ENCODE measurements at regions of chr17 and their contacts with region 1.

Region 1: GRCh38 chr17:42388381-42389134 is at the start of gene STAT3:
- DNase-seq: peak; percentile 100
- ATAC-seq: peak; percentile 89
- H3K4me3 ChIP-seq: peak within 1 kb of the TSS; percentile 67 to 97 (median 91)
- H3K4me3 Mint-ChIP-seq: peak within 1 kb of the TSS; percentile 98
- H3K27ac ChIP-seq: peak within 1 kb of the TSS; percentile 97
- H3K27ac Mint-ChIP-seq: peak within 1 kb of the TSS; percentile 99
- H3K4me1 ChIP-seq: peaks cover 19 to 34% of the 10 kb centered on the region in 2 donors
- H3K4me1 Mint-ChIP-seq: peaks cover 51% of the 10 kb centered on the region
- H3K27me3 ChIP-seq: no peaks in the 10 kb centered on the region
- H3K27me3 Mint-ChIP-seq: no peaks in the 10 kb centered on the region
- CTCF ChIP-seq: no peak
- total RNA-seq, gene STAT3: 140 and 151 TPM in 2 replicates

Region 2: DNA sequence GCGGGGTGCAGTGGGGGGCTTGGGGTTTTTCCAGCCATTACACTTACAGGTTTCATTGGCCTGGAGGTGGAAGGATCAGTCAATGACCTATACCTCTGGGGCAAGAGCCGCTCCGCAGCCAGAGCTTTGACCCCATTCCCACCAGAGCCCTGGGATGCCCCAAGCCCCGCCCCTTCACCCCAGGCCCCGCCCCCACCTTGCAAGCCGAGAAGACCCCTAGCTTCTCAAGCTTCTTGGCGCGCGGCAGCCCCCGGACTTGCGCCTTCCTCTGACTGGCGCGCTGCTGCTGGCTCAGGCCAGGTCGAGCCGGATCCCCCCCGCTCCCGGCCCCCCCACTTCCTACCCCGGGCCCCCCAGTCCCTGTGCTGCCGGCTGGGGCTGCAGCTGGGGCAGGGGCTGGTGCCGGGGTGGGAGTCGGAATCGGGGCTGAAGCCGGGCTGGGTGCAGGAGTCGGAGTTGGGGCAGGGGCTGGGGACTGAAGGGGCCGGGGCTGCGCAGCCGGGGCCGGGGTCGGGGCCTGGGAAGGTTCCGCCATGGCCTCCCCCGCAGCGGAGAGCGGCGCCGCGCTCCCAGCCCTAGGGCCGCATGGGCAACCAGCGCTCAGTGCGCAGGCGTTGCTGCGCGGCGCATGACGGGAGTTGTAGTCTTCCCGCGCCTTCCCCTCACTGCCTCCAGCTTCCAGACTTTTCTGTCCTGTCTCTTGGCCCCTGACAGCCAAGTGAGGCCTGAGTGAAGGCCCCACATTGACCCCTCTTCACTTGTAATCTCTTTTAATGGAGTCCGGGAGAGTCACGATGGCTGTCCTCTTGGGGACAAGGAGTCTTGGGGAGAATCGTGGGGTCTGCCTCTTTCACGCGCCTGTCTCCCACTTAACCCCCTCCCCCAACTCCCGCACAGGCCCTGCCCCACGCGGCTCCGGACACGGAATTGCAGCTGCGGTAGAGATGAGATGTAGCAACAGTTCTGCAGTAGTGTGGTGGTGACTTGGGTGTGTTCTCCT is 267.5 kb before region 1 on chr17 and contains the start of gene KAT2A:
- CTCF ChIA-PET with region 1: interaction called, 3 read pairs
- POLR2A ChIA-PET with region 1: interaction called, 13 read pairs
- intact Hi-C with region 1: loop called (anchors 10 kb)
- DNase-seq: peak; percentile 82
- ATAC-seq: peak; percentile 89
- H3K4me3 ChIP-seq: peak within 1 kb of the TSS in 4 of 5 experiments; percentile 40 to 79 (median 58)
- H3K4me3 Mint-ChIP-seq: peak within 1 kb of the TSS; percentile 72
- H3K27ac ChIP-seq: no peak within 1 kb of the TSS
- H3K27ac Mint-ChIP-seq: peak within 1 kb of the TSS; percentile 59
- H3K4me1 ChIP-seq: peaks cover 14 to 26% of the 10 kb centered on the region in 2 donors
- H3K4me1 Mint-ChIP-seq: peaks cover 28% of the 10 kb centered on the region
- H3K27me3 ChIP-seq: no peaks in the 10 kb centered on the region
- H3K27me3 Mint-ChIP-seq: no peaks in the 10 kb centered on the region
- CTCF ChIP-seq: no peak
- total RNA-seq, gene KAT2A: 61.6 and 66.3 TPM in 2 replicates

Region 3: GRCh38 chr17:42312285-42313130 is 76.0 kb before region 1 on chr17:
- CTCF ChIA-PET with region 1: interaction called, 12 read pairs
- POLR2A ChIA-PET with region 1: interaction called, 12 read pairs
- intact Hi-C with region 1: no loop called
- DNase-seq: peak; percentile 87
- ATAC-seq: peak; percentile 72
- H3K4me3 ChIP-seq: peak overlapping the region in 4 of 5 experiments; percentile 29 to 64 (median 44)
- H3K4me3 Mint-ChIP-seq: peak overlapping the region; percentile 66
- H3K27ac ChIP-seq: no peak overlapping the region
- H3K27ac Mint-ChIP-seq: no peak overlapping the region
- H3K4me1 ChIP-seq: peaks cover 44 to 52% of the 10 kb centered on the region in 2 donors
- H3K4me1 Mint-ChIP-seq: peaks cover 51% of the 10 kb centered on the region
- H3K27me3 ChIP-seq: no peaks in the 10 kb centered on the region
- H3K27me3 Mint-ChIP-seq: no peaks in the 10 kb centered on the region
- CTCF ChIP-seq: peak; percentile 76

Region 4: DNA sequence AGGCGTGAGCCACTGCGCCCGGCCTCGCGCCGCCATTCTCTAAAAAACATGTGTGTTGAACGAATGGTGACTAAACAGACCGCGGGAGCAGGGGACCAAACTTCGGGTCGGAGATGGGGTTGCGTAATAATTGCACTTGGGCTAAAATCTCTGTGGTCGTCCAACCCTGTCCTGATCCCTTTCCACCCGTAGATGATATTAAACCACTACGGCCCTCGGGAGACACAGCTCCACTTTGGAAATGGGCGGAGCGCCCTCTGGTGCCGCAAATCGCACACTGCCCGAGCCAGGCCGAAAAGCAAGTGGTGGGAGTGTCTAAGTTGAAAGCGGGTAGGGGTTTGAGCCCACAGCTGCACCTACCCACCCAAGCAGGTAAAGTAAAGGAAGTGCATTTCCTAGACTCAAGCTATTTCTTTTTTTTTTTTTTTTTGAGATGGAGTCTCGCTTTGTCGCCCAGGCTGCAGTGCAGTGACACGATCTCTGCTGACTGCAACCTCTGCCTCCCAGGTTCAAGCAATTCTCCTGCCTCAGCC is 17.5 kb after region 1 on chr17:
- CTCF ChIA-PET with region 1: interaction called, 24 read pairs
- POLR2A ChIA-PET with region 1: interaction called, 9 read pairs
- intact Hi-C with region 1: loop called (anchors 1 kb)
- DNase-seq: peak; percentile 86
- ATAC-seq: peak; percentile 79
- H3K4me3 ChIP-seq: no peak overlapping the region
- H3K4me3 Mint-ChIP-seq: no peak overlapping the region
- H3K27ac ChIP-seq: no peak overlapping the region
- H3K27ac Mint-ChIP-seq: peak overlapping the region; percentile 27
- H3K4me1 ChIP-seq: peaks cover 2 to 16% of the 10 kb centered on the region in 2 donors
- H3K4me1 Mint-ChIP-seq: peaks cover 13% of the 10 kb centered on the region
- H3K27me3 ChIP-seq: peaks cover 0 to 10% (median 2%) of the 10 kb centered on the region in 4 experiments
- H3K27me3 Mint-ChIP-seq: peaks cover 5% of the 10 kb centered on the region
- CTCF ChIP-seq: peak; percentile 89

Region 5: DNA sequence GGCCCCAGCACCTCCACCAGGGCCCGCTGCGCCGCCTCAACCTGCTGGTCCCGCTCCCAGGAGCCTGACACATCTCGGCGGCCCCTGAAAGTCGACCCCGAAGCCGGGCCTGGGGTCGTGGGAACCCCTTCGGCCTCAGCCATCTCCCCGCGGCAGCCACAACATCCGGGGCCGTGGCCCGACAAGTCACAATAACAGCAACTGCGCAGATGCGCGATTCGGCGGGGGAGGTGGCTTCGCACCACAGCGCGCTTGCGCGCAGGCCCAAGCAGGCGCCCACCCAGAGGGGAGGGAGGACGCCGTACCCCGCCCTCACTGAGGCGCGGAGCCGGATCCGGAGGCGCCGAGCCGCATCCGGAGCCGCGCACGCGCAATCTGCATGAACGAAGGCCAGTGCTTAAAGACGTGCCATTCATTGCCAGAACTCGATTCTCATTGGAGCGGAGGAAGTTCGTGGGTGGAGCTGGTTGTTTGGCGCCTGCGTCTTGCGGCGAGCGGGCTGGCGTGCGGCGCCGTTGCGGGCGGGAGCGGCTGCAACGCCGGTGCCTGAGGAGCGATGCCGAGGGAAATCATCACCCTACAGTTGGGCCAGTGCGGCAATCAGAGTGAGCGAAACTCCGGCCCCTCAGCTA is 220.7 kb after region 1 on chr17 and contains the starts of genes RETREG3 and TUBG1:
- CTCF ChIA-PET with region 1: no interaction called
- POLR2A ChIA-PET with region 1: no interaction called
- intact Hi-C with region 1: loop called (anchors 1 kb)
- DNase-seq: peak; percentile 100
- ATAC-seq: peak; percentile 91
- H3K4me3 ChIP-seq: peak within 1 kb of the TSS; percentile 73 to 95 (median 85)
- H3K4me3 Mint-ChIP-seq: peak within 1 kb of the TSS; percentile 100
- H3K27ac ChIP-seq: peak within 1 kb of the TSS; percentile 79 to 95
- H3K27ac Mint-ChIP-seq: peak within 1 kb of the TSS; percentile 98
- H3K4me1 ChIP-seq: peaks cover 38 to 42% of the 10 kb centered on the region in 2 donors
- H3K4me1 Mint-ChIP-seq: peaks cover 51% of the 10 kb centered on the region
- H3K27me3 ChIP-seq: no peaks in the 10 kb centered on the region
- H3K27me3 Mint-ChIP-seq: no peaks in the 10 kb centered on the region
- CTCF ChIP-seq: peak; percentile 37
- total RNA-seq, gene RETREG3: 103 and 108 TPM in 2 replicates
- total RNA-seq, gene TUBG1: 15.7 and 17.2 TPM in 2 replicates

Region 6: GRCh38 chr17:43360739-43361505 is 972.4 kb after region 1 on chr17:
- CTCF ChIA-PET with region 1: no interaction called
- POLR2A ChIA-PET with region 1: no interaction called
- intact Hi-C with region 1: loop called (anchors 10 kb)
- DNase-seq: peak; percentile 94
- ATAC-seq: peak; percentile 80
- H3K4me3 ChIP-seq: peak overlapping the region; percentile 61 to 88 (median 70)
- H3K4me3 Mint-ChIP-seq: peak overlapping the region; percentile 96
- H3K27ac ChIP-seq: peak overlapping the region; percentile 97 to 99
- H3K27ac Mint-ChIP-seq: peak overlapping the region; percentile 100
- H3K4me1 ChIP-seq: peaks cover 9 to 15% of the 10 kb centered on the region in 2 donors
- H3K4me1 Mint-ChIP-seq: peaks cover 21% of the 10 kb centered on the region
- H3K27me3 ChIP-seq: no peaks in the 10 kb centered on the region
- H3K27me3 Mint-ChIP-seq: no peaks in the 10 kb centered on the region
- CTCF ChIP-seq: no peak